B cell (primary cell): ENCODE measurements at regions of chr16 and their contacts with region 1.

Region 1: GRCh38 chr16:69386596-69386995 is 789 bp upstream of the TERF2 start:
- DNase-seq: no peak
- ATAC-seq: no peak
- H3K4me3 ChIP-seq: peak overlapping the region in 1 of 5 experiments; percentile 64
- H3K4me3 Mint-ChIP-seq: peak overlapping the region; percentile 57
- H3K27ac ChIP-seq: no peak overlapping the region
- H3K27ac Mint-ChIP-seq: no peak overlapping the region
- H3K4me1 ChIP-seq: peaks cover 31 to 33% of the 10 kb centered on the region in 2 donors
- H3K4me1 Mint-ChIP-seq: peaks cover 30% of the 10 kb centered on the region
- H3K27me3 ChIP-seq: no peaks in the 10 kb centered on the region
- H3K27me3 Mint-ChIP-seq: no peaks in the 10 kb centered on the region
- CTCF ChIP-seq: no peak

Region 2: DNA sequence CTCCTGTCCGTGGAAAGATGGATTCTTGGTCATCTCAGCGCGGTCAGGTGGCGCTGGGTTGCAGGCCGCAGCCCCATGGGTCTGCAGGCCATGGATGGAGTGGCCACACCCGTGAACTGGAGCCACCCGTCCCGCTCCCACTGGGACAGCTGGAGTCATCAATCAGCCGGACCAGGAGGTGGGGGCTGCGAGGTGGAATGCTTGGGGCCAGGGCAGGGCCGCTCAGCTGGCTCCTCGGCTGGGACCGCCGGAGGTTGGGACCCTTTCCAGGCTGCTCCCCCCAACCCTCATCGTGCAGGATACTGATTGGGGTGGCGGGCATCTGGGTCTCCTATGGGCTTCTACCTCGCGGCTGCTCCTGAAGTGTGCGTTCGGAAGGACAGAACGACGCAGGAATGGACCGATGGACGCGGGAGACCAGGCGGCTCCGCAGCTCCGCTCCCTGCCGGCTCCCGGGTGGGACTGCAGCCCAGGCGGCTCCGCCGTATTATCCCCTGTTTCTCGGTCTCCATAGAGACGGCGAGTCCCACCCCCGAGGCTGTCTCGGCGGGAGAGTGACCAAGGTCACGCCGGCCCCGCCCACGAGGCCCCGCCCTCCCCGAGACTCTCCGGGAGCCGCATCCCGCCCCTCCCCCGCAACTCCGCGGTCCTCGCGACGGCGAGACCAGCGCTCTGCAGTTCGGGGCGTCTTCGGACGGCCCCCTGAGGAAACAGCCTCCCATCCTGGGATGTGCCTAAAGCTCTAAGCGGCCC is 1993.4 kb before region 1 on chr16 and contains the start of gene TPPP3:
- CTCF ChIA-PET with region 1: no interaction called
- POLR2A ChIA-PET with region 1: no interaction called
- intact Hi-C with region 1: no loop called
- DNase-seq: no peak
- ATAC-seq: no peak
- H3K4me3 ChIP-seq: peak within 1 kb of the TSS in 3 of 5 experiments; percentile 21 to 39 (median 31)
- H3K4me3 Mint-ChIP-seq: peak within 1 kb of the TSS; percentile 85
- H3K27ac ChIP-seq: no peak within 1 kb of the TSS
- H3K27ac Mint-ChIP-seq: peak within 1 kb of the TSS; percentile 10
- H3K4me1 ChIP-seq: peaks cover 35 to 36% of the 10 kb centered on the region in 2 donors
- H3K4me1 Mint-ChIP-seq: peaks cover 26% of the 10 kb centered on the region
- H3K27me3 ChIP-seq: peaks cover 0 to 42% (median 31%) of the 10 kb centered on the region in 4 experiments
- H3K27me3 Mint-ChIP-seq: peaks cover 36% of the 10 kb centered on the region
- CTCF ChIP-seq: peak; percentile 38
- total RNA-seq, gene TPPP3: not detected in 2 replicates

Region 3: DNA sequence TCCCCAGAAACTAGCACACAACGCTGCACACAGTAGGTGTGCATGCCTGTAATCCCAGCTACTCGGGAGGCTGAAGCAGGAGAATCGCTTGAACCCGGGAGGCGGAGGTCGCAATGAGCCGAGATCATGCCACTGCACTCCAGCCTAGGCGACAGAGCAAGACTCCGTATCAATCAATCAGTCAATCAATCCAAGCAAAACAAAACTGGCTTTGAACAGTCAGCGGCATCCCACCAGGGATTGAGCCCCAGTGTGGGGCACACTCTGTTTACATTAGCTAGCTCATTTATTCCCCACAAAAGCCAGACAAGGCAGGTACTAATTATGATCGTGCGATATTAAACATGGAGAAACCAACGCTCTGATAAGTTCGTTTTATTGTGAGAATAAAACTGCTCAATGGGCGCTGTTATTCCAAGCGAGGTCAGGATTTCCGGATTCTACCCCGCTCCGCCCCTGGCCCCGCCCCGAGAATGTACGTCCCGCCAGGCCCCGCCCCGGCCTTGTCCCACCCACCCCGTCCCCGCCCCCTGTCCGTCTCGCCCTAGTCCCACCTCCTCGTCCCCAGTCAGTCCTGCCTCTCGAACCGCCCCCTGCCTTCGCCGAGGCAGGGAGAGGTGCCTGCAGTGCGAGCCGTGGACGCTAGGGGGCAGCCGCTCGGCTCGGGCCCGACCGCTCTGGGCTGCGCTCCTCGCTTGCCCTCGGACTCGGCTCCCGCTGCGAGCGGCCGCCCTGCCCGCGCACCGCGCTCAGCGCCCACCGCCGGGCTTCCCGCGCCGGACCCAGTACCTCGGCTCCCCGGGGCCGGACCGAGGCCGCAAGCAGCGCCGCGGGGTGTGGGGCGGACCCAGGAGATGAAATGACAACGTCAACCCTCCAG is 75.7 kb before region 1 on chr16 and contains the start of gene VPS4A:
- CTCF ChIA-PET with region 1: interaction called, 4 read pairs
- POLR2A ChIA-PET with region 1: no interaction called
- intact Hi-C with region 1: loop called (anchors 1 kb)
- DNase-seq: peak; percentile 97
- ATAC-seq: peak; percentile 98
- H3K4me3 ChIP-seq: peak within 1 kb of the TSS; percentile 62 to 89 (median 67)
- H3K4me3 Mint-ChIP-seq: peak within 1 kb of the TSS; percentile 99
- H3K27ac ChIP-seq: peak within 1 kb of the TSS; percentile 75 to 84
- H3K27ac Mint-ChIP-seq: peak within 1 kb of the TSS; percentile 94
- H3K4me1 ChIP-seq: peaks cover 10 to 23% of the 10 kb centered on the region in 2 donors
- H3K4me1 Mint-ChIP-seq: peaks cover 24% of the 10 kb centered on the region
- H3K27me3 ChIP-seq: no peaks in the 10 kb centered on the region
- H3K27me3 Mint-ChIP-seq: no peaks in the 10 kb centered on the region
- CTCF ChIP-seq: peak; percentile 86
- total RNA-seq, gene VPS4A: 41.4 and 43.8 TPM in 2 replicates

Region 4: DNA sequence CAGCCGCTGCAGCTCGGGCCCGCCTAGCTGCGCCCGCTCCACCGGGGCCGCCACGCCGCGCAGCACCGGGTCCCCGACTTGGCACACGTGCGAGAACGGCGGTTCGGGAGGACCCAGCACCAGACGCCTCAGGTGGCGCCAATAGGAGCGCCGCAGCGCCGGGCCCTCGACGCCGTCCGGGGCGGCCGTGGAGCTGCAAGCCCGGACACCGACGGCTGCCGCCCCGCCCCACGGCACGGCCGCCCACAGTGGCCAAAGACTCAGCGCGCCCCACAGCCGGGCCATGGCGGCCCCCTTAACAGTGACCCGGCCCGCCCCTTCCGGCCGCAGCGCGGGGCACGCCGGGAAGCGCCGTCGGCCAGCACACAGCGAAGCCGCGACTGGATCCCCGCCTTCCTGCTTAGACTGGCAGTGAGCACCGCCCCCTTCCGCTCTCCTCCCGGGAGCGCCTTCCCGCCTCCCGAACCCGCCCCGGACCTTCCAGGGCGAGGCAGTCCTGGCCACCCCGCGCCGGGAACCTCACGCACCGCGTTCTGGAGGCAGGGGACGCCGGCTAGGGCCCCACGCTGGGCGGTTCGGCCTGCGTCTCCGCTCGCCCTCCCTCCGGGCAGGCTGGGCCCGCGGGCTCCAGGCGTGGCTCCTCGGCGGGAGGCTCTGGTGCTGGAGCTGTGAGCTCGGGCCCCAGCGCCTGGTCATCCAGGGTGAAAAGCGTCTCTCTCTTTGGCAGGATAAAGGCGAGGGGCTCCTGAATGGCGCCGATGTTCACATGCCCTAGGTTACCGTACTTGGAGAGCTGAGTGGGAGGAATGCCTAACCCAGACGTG is 56.1 kb before region 1 on chr16 and contains the start of gene PDF:
- CTCF ChIA-PET with region 1: interaction called, 7 read pairs
- POLR2A ChIA-PET with region 1: no interaction called
- intact Hi-C with region 1: loop called (anchors 2 kb)
- DNase-seq: peak; percentile 86
- ATAC-seq: peak; percentile 97
- H3K4me3 ChIP-seq: peak within 1 kb of the TSS; percentile 38 to 88 (median 70)
- H3K4me3 Mint-ChIP-seq: peak within 1 kb of the TSS; percentile 86
- H3K27ac ChIP-seq: peak within 1 kb of the TSS; percentile 41 to 88
- H3K27ac Mint-ChIP-seq: peak within 1 kb of the TSS; percentile 80
- H3K4me1 ChIP-seq: peaks cover 15 to 32% of the 10 kb centered on the region in 2 donors
- H3K4me1 Mint-ChIP-seq: peaks cover 44% of the 10 kb centered on the region
- H3K27me3 ChIP-seq: no peaks in the 10 kb centered on the region
- H3K27me3 Mint-ChIP-seq: no peaks in the 10 kb centered on the region
- CTCF ChIP-seq: no peak
- total RNA-seq, gene PDF: 9.2 and 9.6 TPM in 2 replicates

Region 5: DNA sequence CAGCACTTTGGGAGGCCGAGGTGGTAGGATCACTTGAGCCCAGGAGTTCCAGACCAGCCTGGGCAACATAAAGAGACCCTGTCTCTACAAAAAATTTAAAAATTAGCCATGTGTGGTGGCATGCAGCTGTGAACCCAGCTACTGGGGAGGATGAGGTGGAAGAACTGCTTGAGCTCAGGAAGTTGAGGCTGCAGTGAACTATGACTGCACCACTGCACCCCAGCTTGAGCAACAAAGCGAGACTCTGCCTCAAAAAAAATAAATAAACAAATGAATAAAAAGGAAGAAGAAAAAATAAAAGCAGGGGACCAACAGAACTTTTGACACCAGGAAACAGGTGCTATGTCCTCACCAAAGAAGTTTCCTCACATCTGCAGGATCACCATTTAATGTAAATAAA is 15.0 kb before region 1 on chr16:
- CTCF ChIA-PET with region 1: interaction called, 5 read pairs
- POLR2A ChIA-PET with region 1: no interaction called
- intact Hi-C with region 1: loop called (anchors 2 kb)
- DNase-seq: peak; percentile 73
- ATAC-seq: peak; percentile 79
- H3K4me3 ChIP-seq: no peak overlapping the region
- H3K4me3 Mint-ChIP-seq: peak overlapping the region; percentile 68
- H3K27ac ChIP-seq: peak overlapping the region; percentile 70 to 74
- H3K27ac Mint-ChIP-seq: peak overlapping the region; percentile 86
- H3K4me1 ChIP-seq: peaks cover 25 to 44% of the 10 kb centered on the region in 2 donors
- H3K4me1 Mint-ChIP-seq: peaks cover 42% of the 10 kb centered on the region
- H3K27me3 ChIP-seq: no peaks in the 10 kb centered on the region
- H3K27me3 Mint-ChIP-seq: no peaks in the 10 kb centered on the region
- CTCF ChIP-seq: no peak

Region 6: GRCh38 chr16:69754469-69755310 is 368.1 kb after region 1 on chr16 and contains the start of gene NOB1:
- CTCF ChIA-PET with region 1: no interaction called
- POLR2A ChIA-PET with region 1: no interaction called
- intact Hi-C with region 1: loop called (anchors 1 kb)
- DNase-seq: peak; percentile 99
- ATAC-seq: peak; percentile 96
- H3K4me3 ChIP-seq: peak within 1 kb of the TSS; percentile 73 to 100 (median 91)
- H3K4me3 Mint-ChIP-seq: peak within 1 kb of the TSS; percentile 99
- H3K27ac ChIP-seq: peak within 1 kb of the TSS; percentile 61 to 76
- H3K27ac Mint-ChIP-seq: peak within 1 kb of the TSS; percentile 94
- H3K4me1 ChIP-seq: peaks cover 8 to 20% of the 10 kb centered on the region in 2 donors
- H3K4me1 Mint-ChIP-seq: peaks cover 21% of the 10 kb centered on the region
- H3K27me3 ChIP-seq: no peaks in the 10 kb centered on the region
- H3K27me3 Mint-ChIP-seq: no peaks in the 10 kb centered on the region
- CTCF ChIP-seq: peak; percentile 92
- total RNA-seq, gene NOB1: 44.9 and 49.6 TPM in 2 replicates